ENCODE measurements at regions of chr12 and their contacts with region 1.

Region 1: GRCh38 chr12:24705741-24706358 is 243.1 kb downstream of the BCAT1 start:
- DNase-seq: peak; percentile 41
- H3K4me3 Mint-ChIP-seq: no peak overlapping the region
- H3K27ac Mint-ChIP-seq: peak overlapping the region; percentile 75
- H3K4me1 Mint-ChIP-seq: peaks cover 17% of the 10 kb centered on the region
- H3K27me3 Mint-ChIP-seq: peaks cover 2% of the 10 kb centered on the region

Region 2: GRCh38 chr12:24554612-24555295 is 151.1 kb before region 1 on chr12:
- CTCF ChIA-PET with region 1: no interaction called
- intact Hi-C with region 1: no loop called
- DNase-seq: no peak
- H3K4me3 Mint-ChIP-seq: no peak overlapping the region
- H3K27ac Mint-ChIP-seq: no peak overlapping the region
- H3K4me1 Mint-ChIP-seq: no peaks in the 10 kb centered on the region
- H3K27me3 Mint-ChIP-seq: peaks cover 16% of the 10 kb centered on the region

Region 3: GRCh38 chr12:24596768-24597388 is 109.0 kb before region 1 on chr12:
- CTCF ChIA-PET with region 1: no interaction called
- intact Hi-C with region 1: loop called (anchors 2 kb)
- DNase-seq: no peak
- H3K4me3 Mint-ChIP-seq: no peak overlapping the region
- H3K27ac Mint-ChIP-seq: no peak overlapping the region
- H3K4me1 Mint-ChIP-seq: peaks cover 2% of the 10 kb centered on the region
- H3K27me3 Mint-ChIP-seq: peaks cover 7% of the 10 kb centered on the region

Region 4: GRCh38 chr12:24719293-24719721 is 13.5 kb after region 1 on chr12:
- CTCF ChIA-PET with region 1: interaction called, 4 read pairs
- intact Hi-C with region 1: loop called (anchors 1 kb)
- DNase-seq: peak; percentile 69
- H3K4me3 Mint-ChIP-seq: no peak overlapping the region
- H3K27ac Mint-ChIP-seq: peak overlapping the region; percentile 87
- H3K4me1 Mint-ChIP-seq: peaks cover 30% of the 10 kb centered on the region
- H3K27me3 Mint-ChIP-seq: peaks cover 5% of the 10 kb centered on the region

Region 5: DNA sequence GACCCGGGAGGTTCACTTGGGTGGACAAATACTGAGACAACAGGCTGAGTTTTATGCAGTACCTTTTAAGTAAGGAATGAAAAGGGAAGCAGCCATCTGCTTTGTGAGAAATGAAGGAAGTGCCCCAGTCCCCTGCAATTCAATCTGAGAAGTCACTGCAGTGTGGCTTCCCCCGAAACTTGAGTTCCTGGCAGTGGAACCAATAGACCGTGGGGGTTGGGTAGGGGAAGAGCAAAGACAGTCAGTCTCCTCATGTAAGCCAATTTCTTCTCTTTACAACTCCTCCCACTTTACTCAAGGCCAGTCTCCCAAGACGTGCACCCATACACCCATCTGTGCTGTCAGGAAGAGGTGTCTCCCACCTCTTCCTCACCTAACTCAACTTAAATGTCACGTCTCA is 36.5 kb after region 1 on chr12:
- CTCF ChIA-PET with region 1: no interaction called
- intact Hi-C with region 1: loop called (anchors 1 kb)
- DNase-seq: peak; percentile 59
- H3K4me3 Mint-ChIP-seq: no peak overlapping the region
- H3K27ac Mint-ChIP-seq: no peak overlapping the region
- H3K4me1 Mint-ChIP-seq: peaks cover 8% of the 10 kb centered on the region
- H3K27me3 Mint-ChIP-seq: no peaks in the 10 kb centered on the region

Region 6: GRCh38 chr12:24902511-24903328 is 196.9 kb after region 1 on chr12:
- CTCF ChIA-PET with region 1: no interaction called
- intact Hi-C with region 1: loop called (anchors 5 kb)
- DNase-seq: peak; percentile 23
- H3K4me3 Mint-ChIP-seq: peak overlapping the region; percentile 85
- H3K27ac Mint-ChIP-seq: peak overlapping the region; percentile 71
- H3K4me1 Mint-ChIP-seq: peaks cover 31% of the 10 kb centered on the region
- H3K27me3 Mint-ChIP-seq: peaks cover 28% of the 10 kb centered on the region

Measured in activated naive CD4-positive, alpha-beta T cell treated with anti-CD3 and anti-CD28 coated beads for 36 hours (primary cell).